Activated CD4-positive, alpha-beta memory T cell treated with anti-CD3 and anti-CD28 coated beads for 36 hours (primary cell): ENCODE measurements at regions of chrX and their contacts with region 1.

Region 1: DNA sequence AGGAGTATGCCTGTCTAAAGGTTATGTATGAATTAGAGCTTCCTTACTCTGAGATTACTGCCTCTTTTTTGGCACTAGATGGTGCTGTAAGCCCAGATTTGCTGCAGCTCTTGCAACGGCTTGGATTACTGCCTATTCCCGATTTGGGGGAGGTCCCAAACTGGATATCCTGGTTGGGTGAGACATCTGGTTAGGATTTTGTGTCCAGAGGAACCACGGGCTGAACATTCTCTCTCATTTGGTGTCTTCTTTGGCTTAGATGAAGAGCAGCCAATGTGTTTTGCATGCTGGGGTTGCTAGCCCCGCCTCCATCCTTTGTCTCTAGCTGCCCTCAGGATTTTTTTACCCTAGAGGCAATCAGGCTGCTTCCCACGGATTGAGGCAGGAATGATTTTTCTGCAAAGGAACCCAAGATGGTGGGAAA is 31.9 kb downstream of the F8A1 start:
- DNase-seq: peak; percentile 20
- H3K4me3 Mint-ChIP-seq: peak overlapping the region; percentile 54
- H3K27ac Mint-ChIP-seq: no peak overlapping the region
- H3K4me1 Mint-ChIP-seq: peaks cover 1% of the 10 kb centered on the region
- H3K27me3 Mint-ChIP-seq: peaks cover 2% of the 10 kb centered on the region

Region 2: GRCh38 chrX:154091678-154092077 is 826.4 kb before region 1 on chrX:
- CTCF ChIA-PET with region 1: no interaction called
- POLR2A ChIA-PET with region 1: no interaction called
- intact Hi-C with region 1: no loop called
- DNase-seq: no peak
- H3K4me3 Mint-ChIP-seq: no peak overlapping the region
- H3K27ac Mint-ChIP-seq: peak overlapping the region; percentile 62
- H3K4me1 Mint-ChIP-seq: peaks cover 65% of the 10 kb centered on the region
- H3K27me3 Mint-ChIP-seq: no peaks in the 10 kb centered on the region

Region 3: DNA sequence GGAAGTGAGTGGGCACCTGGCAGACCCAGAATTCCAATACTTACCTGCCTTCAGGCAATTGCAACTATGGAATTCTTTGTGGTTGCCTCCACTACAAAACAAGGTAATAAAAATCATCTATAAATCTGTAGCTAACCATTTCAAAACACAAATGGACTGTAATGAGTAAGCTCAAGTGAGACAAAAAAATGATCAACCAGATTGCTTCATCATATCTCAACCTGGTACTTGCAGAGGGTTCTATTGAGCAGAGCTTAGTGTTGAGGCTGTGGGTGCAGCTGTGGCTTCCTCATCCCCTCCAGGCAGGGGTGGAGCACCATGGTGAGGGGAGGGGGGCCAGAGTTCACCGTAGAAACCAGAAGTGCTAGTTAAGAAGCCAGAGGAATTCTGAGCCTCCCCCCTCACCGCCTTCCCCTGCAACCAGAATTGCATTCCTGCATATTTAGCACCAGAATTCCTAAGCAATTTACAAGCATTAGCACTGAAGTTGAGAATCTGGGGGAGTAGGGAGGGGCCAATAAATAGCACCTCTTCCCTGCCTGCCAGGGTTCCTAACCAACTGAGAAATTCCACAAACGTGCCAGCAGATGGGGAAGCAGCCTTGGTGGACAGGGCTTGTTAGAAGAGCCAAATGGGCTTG is 321.7 kb before region 1 on chrX:
- CTCF ChIA-PET with region 1: no interaction called
- POLR2A ChIA-PET with region 1: no interaction called
- intact Hi-C with region 1: no loop called
- DNase-seq: peak; percentile 25
- H3K4me3 Mint-ChIP-seq: no peak overlapping the region
- H3K27ac Mint-ChIP-seq: no peak overlapping the region
- H3K4me1 Mint-ChIP-seq: peaks cover 7% of the 10 kb centered on the region
- H3K27me3 Mint-ChIP-seq: no peaks in the 10 kb centered on the region

Region 4: DNA sequence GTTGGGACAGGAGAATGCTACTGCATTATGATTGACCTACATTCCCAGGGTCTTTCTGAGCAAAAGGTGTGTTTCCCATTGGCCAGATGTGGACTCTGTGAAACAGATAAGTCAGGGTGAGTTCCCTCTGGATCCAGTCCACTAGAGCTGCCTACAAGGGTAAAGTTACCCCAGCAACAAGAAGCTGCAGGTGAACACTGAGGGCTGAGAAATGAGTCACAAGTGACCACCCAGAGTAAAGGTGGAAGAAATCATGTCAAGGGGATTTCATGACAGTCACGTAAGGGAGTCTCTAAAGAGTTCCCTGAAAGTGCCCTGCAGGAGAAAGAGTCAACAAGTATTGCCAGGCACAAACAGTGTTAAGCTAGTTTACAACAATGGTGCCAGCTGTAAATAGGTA is 15.7 kb before region 1 on chrX:
- CTCF ChIA-PET with region 1: interaction called, 13 read pairs
- POLR2A ChIA-PET with region 1: no interaction called
- intact Hi-C with region 1: no loop called
- DNase-seq: no peak
- H3K4me3 Mint-ChIP-seq: no peak overlapping the region
- H3K27ac Mint-ChIP-seq: no peak overlapping the region
- H3K4me1 Mint-ChIP-seq: no peaks in the 10 kb centered on the region
- H3K27me3 Mint-ChIP-seq: no peaks in the 10 kb centered on the region

Region 5: DNA sequence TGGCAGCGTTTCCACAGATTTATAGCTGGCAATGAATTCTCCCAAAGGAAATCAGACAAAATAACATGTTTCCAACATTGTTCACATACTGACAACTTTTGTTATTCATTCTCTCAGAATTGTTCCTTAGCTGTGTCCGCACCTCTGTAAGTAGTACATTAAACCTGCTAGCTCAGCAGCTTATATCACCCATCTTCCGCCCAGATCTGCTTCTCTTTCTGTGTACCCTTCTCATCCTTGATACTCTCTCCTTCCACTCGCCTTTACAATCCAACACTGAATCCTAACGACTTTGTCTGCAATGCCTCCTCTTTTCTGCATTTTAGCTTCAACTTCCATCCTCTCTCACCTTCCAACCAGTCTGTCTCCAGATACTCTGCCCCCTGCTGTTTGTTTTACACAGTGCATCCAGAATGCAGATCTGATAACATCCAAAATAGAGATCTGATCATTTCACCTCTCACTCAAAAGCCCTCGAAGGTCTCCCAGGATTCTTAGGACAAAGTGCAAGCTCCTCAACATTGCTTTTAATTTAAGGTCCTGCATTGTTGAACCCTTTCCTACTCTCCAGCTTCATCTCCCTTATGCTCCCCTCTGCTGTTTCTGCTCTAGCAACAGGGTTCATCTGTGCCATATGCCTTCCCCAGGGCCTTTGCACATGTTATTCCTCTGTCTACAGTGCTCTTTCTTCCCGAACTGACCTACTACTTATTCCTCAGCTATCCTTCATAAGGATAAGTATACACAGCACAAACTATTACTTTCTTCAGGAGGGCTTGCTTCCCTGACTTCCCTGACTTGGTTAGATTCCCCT is 230.9 kb after region 1 on chrX:
- CTCF ChIA-PET with region 1: interaction called, 19 read pairs
- POLR2A ChIA-PET with region 1: no interaction called
- intact Hi-C with region 1: no loop called
- DNase-seq: peak; percentile 36
- H3K4me3 Mint-ChIP-seq: no peak overlapping the region
- H3K27ac Mint-ChIP-seq: no peak overlapping the region
- H3K4me1 Mint-ChIP-seq: no peaks in the 10 kb centered on the region
- H3K27me3 Mint-ChIP-seq: no peaks in the 10 kb centered on the region

Region 6: DNA sequence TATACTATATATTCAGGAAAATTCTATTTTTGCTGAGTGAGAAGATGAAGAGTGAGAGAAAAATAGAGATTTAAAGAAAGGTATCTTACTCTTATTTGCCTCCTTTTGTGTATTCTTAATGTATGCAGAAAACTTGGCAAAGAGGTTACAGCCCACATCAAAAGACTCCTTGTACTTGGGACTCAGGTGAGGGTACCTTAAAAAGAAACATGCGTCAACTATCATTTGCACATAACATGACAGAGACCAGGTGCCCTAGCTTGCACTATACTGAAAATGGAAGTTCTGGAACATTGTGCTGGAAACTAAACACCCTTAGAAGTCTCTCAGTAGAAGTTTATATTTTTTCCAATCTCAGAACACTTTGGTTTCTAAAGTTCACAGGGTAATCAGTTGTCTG is 361.8 kb after region 1 on chrX:
- CTCF ChIA-PET with region 1: no interaction called
- POLR2A ChIA-PET with region 1: no interaction called
- intact Hi-C with region 1: no loop called
- DNase-seq: no peak
- H3K4me3 Mint-ChIP-seq: no peak overlapping the region
- H3K27ac Mint-ChIP-seq: no peak overlapping the region
- H3K4me1 Mint-ChIP-seq: peaks cover 7% of the 10 kb centered on the region
- H3K27me3 Mint-ChIP-seq: no peaks in the 10 kb centered on the region